Activated CD8-positive, alpha-beta memory T cell treated with anti-CD3 and anti-CD28 coated beads, Interleukin-2, amount 10 ng/mL, durations not matched to agents 7 days and 5 days (primary cell): ENCODE measurements at regions of chr19 and their contacts with region 1.

Region 1: DNA sequence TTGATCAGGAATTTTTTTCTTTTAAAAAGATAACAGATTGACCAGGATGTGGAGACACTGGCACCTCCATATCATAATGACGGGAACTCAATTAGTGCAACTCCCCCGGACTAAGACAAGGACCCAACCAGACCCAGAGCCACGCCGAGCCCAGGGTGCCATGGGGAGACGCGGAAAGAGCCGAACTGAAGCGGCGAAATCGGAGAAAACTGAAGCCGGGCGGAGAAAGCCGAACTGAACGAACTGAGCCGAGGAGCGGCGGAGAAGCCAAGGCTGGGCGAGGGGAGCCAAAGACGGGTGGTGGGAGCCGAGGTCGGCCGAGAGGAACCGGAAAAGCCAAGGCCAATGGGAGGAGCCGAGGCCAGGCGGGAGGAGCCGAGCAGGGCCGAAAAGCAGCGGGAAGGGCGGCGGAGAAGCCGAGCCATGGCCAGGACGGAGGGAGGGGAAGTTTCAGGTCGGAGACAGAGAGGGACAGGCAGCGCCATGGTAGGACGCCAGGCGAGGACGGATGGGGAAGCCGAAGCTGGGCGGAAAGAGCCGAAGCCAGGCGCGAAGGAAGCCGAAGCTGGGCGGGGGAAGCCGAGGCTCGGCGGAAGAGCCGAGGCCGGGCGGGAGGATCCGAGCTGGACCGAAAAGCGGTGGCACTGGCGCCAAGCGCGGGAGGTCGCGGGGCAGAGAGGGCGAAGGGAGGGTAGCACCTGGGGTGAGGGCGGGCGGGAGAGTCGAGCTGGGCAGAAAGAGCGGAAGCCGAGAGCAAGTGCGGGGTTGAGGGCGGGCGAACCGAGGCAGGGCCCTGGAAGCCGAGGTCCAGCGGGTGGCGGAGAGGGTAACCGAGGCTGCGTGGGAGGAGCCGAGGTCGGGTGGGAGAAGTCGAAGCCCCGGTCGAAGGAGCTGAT is 29.4 kb downstream of the ZNF557 start:
- DNase-seq: peak; percentile 92
- ATAC-seq: peak; percentile 95
- H3K4me3 Mint-ChIP-seq: peak overlapping the region; percentile 98
- H3K27ac Mint-ChIP-seq: peak overlapping the region; percentile 95
- H3K4me1 Mint-ChIP-seq: peaks cover 27% of the 10 kb centered on the region
- H3K27me3 Mint-ChIP-seq: peaks cover 4% of the 10 kb centered on the region

Region 2: DNA sequence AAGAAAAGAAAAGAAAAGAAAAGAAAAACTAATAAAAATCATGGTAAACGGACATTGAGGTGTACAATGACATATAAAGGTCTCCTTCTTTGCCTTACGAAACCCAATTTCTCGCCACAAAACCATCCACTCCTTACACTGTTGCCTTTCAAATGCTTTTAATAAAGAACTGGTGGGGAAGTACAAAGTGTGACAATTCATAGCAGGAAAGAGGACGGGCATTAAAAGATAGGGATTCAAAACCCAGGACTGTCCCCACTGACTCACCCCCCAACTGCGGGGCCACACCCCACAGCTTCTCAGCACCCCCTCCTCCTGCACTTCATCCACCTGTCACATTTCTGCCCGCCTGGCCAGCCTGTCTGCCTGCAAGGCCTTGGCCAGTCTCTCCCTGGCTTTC is 80.1 kb before region 1 on chr19:
- CTCF ChIA-PET with region 1: no interaction called
- DNase-seq: no peak
- ATAC-seq: no peak
- H3K4me3 Mint-ChIP-seq: no peak overlapping the region
- H3K27ac Mint-ChIP-seq: no peak overlapping the region
- H3K4me1 Mint-ChIP-seq: peaks cover 4% of the 10 kb centered on the region
- H3K27me3 Mint-ChIP-seq: no peaks in the 10 kb centered on the region

Region 3: GRCh38 chr19:7069042-7069903 is 29.7 kb before region 1 on chr19 and contains the start of gene ZNF557:
- CTCF ChIA-PET with region 1: interaction called, 11 read pairs
- DNase-seq: peak; percentile 100
- ATAC-seq: peak; percentile 97
- H3K4me3 Mint-ChIP-seq: peak within 1 kb of the TSS; percentile 94
- H3K27ac Mint-ChIP-seq: peak within 1 kb of the TSS; percentile 75
- H3K4me1 Mint-ChIP-seq: peaks cover 22% of the 10 kb centered on the region
- H3K27me3 Mint-ChIP-seq: no peaks in the 10 kb centered on the region
- total RNA-seq, gene ZNF557: 13.3 to 13.5 TPM

Region 4: GRCh38 chr19:7340959-7341837 is 242.2 kb after region 1 on chr19:
- CTCF ChIA-PET with region 1: interaction called, 33 read pairs
- DNase-seq: peak; percentile 88
- ATAC-seq: peak; percentile 18
- H3K4me3 Mint-ChIP-seq: no peak overlapping the region
- H3K27ac Mint-ChIP-seq: peak overlapping the region; percentile 80
- H3K4me1 Mint-ChIP-seq: peaks cover 62% of the 10 kb centered on the region
- H3K27me3 Mint-ChIP-seq: no peaks in the 10 kb centered on the region